AG04449 (cell line): ENCODE measurements at regions of chr3 and their contacts with region 1.

Region 1: GRCh38 chr3:171772427-171773056 is 37.7 kb downstream of the PLD1 start:
- DNase-seq: no peak
- H3K4me3 ChIP-seq: no peak overlapping the region
- CTCF ChIP-seq: peak; percentile 59

Region 2: GRCh38 chr3:170961616-170962400 is 810.7 kb before region 1 on chr3:
- CTCF ChIA-PET with region 1: interaction called, 24 read pairs
- POLR2A ChIA-PET with region 1: no interaction called
- DNase-seq: no peak
- H3K4me3 ChIP-seq: no peak overlapping the region
- CTCF ChIP-seq: peak; percentile 27

Region 3: DNA sequence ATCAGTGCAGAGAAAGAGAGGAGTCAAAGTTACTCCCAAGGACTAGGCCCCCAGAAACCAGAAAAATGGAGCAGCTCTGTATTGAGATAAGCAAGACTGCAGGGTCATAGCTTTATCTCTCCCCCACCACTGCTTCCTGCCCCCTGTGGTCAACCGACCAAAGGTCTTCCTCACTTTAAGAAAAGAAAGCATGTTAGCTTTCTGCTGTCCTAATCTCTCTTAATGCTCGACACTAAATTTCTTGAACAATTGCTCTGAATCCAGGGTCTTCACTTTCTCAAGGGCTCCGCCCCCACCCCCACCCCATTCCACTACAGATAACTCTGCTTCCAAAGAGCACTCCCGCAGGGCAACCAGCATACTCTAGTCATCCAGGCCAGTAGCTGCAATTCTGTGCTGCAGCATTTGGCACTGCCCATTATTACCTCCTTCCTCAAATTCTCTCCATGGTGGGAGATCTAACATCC is 344.2 kb before region 1 on chr3:
- CTCF ChIA-PET with region 1: no interaction called
- POLR2A ChIA-PET with region 1: no interaction called
- DNase-seq: no peak
- H3K4me3 ChIP-seq: no peak overlapping the region
- CTCF ChIP-seq: no peak

Region 4: GRCh38 chr3:171640520-171641412 is 131.8 kb before region 1 on chr3:
- CTCF ChIA-PET with region 1: interaction called, 173 read pairs
- POLR2A ChIA-PET with region 1: no interaction called
- DNase-seq: peak; percentile 33
- H3K4me3 ChIP-seq: no peak overlapping the region
- CTCF ChIP-seq: peak; percentile 24

Region 5: DNA sequence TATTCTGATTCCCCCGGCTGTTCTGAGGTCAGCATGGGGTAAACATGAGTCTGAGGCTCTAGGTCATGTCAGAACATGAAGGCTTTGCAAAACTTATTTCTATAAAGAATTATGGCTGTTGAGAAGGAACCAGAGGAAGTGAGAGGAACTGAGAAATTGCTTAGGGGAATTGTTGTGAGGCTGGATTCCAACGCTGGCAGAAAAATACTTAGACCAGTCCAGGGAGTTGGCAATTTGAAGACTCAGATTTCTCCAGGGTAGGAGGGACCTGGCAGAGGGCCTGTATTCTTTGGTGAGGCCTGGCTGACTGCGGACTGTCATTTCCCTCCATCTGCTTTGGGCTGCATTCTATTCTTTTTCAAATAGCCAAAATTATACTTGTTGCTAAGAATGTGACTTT is 117.7 kb before region 1 on chr3:
- CTCF ChIA-PET with region 1: interaction called, 115 read pairs
- POLR2A ChIA-PET with region 1: no interaction called
- DNase-seq: no peak
- H3K4me3 ChIP-seq: no peak overlapping the region
- CTCF ChIP-seq: no peak

Region 6: GRCh38 chr3:171712171-171712938 is 60.2 kb before region 1 on chr3:
- CTCF ChIA-PET with region 1: interaction called, 10 read pairs
- POLR2A ChIA-PET with region 1: no interaction called
- DNase-seq: peak; percentile 2
- H3K4me3 ChIP-seq: no peak overlapping the region
- CTCF ChIP-seq: no peak

Region 7: DNA sequence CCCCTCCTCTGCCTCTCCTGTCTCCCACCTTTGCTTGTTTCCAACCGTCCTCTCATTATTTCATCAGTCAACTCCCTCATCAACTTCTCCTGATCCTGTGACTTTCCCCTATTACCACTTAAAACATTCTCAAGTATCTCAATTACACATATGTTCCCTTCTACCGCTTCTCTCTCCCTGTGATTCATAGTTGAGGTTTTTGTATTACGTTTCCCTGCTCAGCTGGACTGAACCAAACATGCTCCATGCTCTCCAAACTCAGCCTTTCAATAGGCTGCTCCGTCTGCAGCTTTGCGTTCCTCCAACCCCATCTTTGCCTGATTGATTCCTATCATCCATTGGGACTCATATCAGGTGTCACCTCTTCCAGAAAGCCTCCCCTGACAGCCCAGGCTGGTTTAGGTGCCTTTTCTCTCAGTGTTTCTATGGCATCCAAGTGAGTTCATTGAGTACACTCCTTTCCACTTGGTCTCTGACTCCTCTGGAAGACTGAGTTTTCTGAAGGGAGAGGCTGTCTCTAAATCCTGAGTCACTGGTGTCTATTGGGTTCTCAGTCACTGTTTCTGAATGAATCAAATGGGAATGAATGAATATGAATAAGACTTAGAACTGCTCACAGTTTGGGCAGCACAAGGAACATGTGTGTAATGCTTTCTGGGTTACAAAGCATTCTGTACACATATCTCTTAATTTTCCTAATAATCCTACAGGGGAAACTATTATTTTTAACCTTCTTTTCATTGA is 18.7 kb before region 1 on chr3:
- CTCF ChIA-PET with region 1: interaction called, 90 read pairs
- POLR2A ChIA-PET with region 1: no interaction called
- DNase-seq: peak; percentile 63
- H3K4me3 ChIP-seq: no peak overlapping the region
- CTCF ChIP-seq: no peak

Region 8: GRCh38 chr3:171829841-171830517 is 57.4 kb after region 1 on chr3:
- CTCF ChIA-PET with region 1: interaction called, 18 read pairs
- POLR2A ChIA-PET with region 1: no interaction called
- DNase-seq: no peak
- H3K4me3 ChIP-seq: no peak overlapping the region
- CTCF ChIP-seq: peak; percentile 81